CD4-positive, alpha-beta T cell (primary cell): ENCODE measurements at regions of chr21 and their contacts with region 1.

Region 1: GRCh38 chr21:42746593-42747275 is 93.3 kb downstream of the PDE9A start:
- DNase-seq: peak; percentile 32 to 81 (median 64)
- ATAC-seq: peak; percentile 83
- H3K4me3 ChIP-seq: peak overlapping the region; percentile 29
- H3K4me3 Mint-ChIP-seq: peak overlapping the region; percentile 57
- H3K27ac ChIP-seq: peak overlapping the region; percentile 67 to 76
- H3K27ac Mint-ChIP-seq: peak overlapping the region; percentile 99
- H3K4me1 ChIP-seq: peaks cover 32% of the 10 kb centered on the region
- H3K4me1 Mint-ChIP-seq: peaks cover 29% of the 10 kb centered on the region
- H3K27me3 ChIP-seq: no peaks in the 10 kb centered on the region
- H3K27me3 Mint-ChIP-seq: no peaks in the 10 kb centered on the region
- CTCF ChIP-seq: no peak

Region 2: DNA sequence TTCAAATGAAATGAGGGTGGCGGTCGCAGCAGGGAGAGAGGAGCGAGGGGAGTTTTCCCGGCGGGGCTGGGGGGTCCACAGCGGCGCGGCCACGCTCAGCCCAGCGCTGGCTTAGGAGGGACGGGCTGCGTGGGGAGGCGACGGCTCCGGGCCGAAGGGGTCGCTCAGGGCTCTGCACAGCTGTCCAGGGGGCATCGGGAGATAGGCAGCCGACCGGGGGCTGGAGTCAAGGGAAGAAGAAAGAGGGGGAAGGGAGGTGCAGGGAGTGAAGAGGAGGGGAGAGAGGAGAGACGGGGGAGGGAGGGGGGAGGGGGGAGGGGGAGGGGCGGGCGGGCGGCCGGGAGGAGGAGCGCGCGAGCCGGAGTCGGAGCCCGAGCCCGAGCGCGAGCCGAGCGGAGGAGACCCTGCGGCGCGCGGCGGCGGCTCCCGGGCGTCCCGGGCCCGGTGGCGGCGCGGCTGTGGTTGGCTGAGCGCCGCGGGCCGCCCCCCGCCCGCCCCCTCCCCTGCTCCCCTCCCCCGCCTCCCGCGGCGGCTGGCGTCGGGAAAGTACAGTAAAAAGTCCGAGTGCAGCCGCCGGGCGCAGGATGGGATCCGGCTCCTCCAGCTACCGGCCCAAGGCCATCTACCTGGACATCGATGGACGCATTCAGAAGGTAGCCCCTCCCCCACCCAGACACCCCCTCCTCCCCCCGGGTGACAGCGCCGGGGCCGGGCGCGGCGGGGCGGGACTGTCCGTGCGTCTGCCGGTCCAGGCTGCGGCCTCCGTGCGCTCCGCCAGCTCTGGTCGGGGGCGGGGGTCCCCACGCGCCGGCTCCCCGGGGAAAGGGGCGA is 93.3 kb before region 1 on chr21 and contains the start of gene PDE9A:
- CTCF ChIA-PET with region 1: no interaction called
- POLR2A ChIA-PET with region 1: interaction called, 15 read pairs
- intact Hi-C with region 1: loop called in 1 of 2 experiments (anchors 5 kb)
- DNase-seq: peak in 12 of 14 experiments; percentile 11 to 72 (median 44)
- ATAC-seq: peak; percentile 79
- H3K4me3 ChIP-seq: peak within 1 kb of the TSS; percentile 58
- H3K4me3 Mint-ChIP-seq: peak within 1 kb of the TSS; percentile 91
- H3K27ac ChIP-seq: no peak within 1 kb of the TSS
- H3K27ac Mint-ChIP-seq: peak within 1 kb of the TSS; percentile 71
- H3K4me1 ChIP-seq: peaks cover 24% of the 10 kb centered on the region
- H3K4me1 Mint-ChIP-seq: peaks cover 20% of the 10 kb centered on the region
- H3K27me3 ChIP-seq: peaks cover 0 to 8% of the 10 kb centered on the region in 2 experiments
- H3K27me3 Mint-ChIP-seq: no peaks in the 10 kb centered on the region
- CTCF ChIP-seq: no peak
- total RNA-seq, gene PDE9A: 12.6 to 13.2 TPM

Region 3: GRCh38 chr21:42684109-42684916 is 62.4 kb before region 1 on chr21:
- CTCF ChIA-PET with region 1: interaction called, 4 read pairs
- POLR2A ChIA-PET with region 1: interaction called, 6 read pairs
- intact Hi-C with region 1: loop called in 1 of 2 experiments (anchors 5 kb)
- DNase-seq: peak; percentile 23 to 73 (median 42)
- ATAC-seq: peak; percentile 68
- H3K4me3 ChIP-seq: peak overlapping the region; percentile 41
- H3K4me3 Mint-ChIP-seq: peak overlapping the region; percentile 91
- H3K27ac ChIP-seq: peak overlapping the region; percentile 29 to 34
- H3K27ac Mint-ChIP-seq: peak overlapping the region; percentile 93
- H3K4me1 ChIP-seq: peaks cover 50% of the 10 kb centered on the region
- H3K4me1 Mint-ChIP-seq: peaks cover 49% of the 10 kb centered on the region
- H3K27me3 ChIP-seq: no peaks in the 10 kb centered on the region
- H3K27me3 Mint-ChIP-seq: no peaks in the 10 kb centered on the region
- CTCF ChIP-seq: no peak

Region 4: DNA sequence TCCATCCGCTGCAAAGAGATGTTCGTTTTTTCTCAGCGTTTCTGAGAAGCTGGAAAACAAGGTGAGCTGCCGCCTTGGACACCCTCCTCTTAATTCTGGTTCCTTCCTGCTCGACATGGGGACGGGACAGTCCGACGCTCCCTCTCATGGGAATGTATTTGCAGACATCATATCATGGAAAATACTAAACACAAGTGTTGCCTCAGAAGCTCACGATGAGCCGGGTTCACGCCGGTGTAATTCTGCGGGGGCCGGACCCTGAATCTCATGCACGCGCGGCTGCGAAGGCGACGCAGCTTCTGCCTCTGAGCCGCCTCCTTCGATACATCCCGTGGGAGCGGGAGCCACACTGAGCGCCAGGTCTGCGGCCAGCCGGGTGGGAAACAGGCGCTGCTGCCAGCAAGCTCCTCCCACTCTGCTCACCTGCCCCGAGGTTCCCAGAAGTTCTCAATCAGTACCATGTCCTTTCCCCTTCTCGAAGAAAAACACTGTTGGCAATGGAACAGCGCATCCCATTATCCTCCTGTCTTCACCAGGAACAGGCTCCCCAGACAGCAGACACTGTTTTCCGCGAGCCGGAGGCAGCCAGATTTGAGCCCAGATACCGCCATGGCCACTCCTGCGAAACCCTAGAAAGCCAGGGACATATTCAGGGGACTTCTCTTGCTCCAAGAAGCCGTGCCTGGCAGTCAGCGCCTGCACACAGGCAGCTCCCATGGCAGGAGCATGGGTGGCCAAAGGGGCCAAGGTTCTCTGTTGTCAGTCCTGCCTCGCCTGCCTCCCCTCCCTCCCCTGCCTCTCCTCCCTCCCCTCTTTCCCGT is 34.6 kb after region 1 on chr21:
- CTCF ChIA-PET with region 1: interaction called, 3 read pairs
- POLR2A ChIA-PET with region 1: interaction called, 36 read pairs
- intact Hi-C with region 1: loop called in 1 of 2 experiments (anchors 5 kb)
- DNase-seq: peak in 2 of 14 experiments; percentile 15 to 27
- ATAC-seq: no peak
- H3K4me3 ChIP-seq: no peak overlapping the region
- H3K4me3 Mint-ChIP-seq: peak overlapping the region; percentile 57
- H3K27ac ChIP-seq: peak overlapping the region in 1 of 2 donors; percentile 2
- H3K27ac Mint-ChIP-seq: peak overlapping the region; percentile 99
- H3K4me1 ChIP-seq: peaks cover 46% of the 10 kb centered on the region
- H3K4me1 Mint-ChIP-seq: peaks cover 56% of the 10 kb centered on the region
- H3K27me3 ChIP-seq: no peaks in the 10 kb centered on the region
- H3K27me3 Mint-ChIP-seq: no peaks in the 10 kb centered on the region
- CTCF ChIP-seq: no peak